Motor neuron (in vitro differentiated cells): ENCODE measurements at regions of chr4 and their contacts with region 1.

Region 1: GRCh38 chr4:41214136-41214824 is at the start of gene APBB2:
- ATAC-seq: peak; percentile 73 to 87 (median 85)
- H3K4me3 ChIP-seq: peak within 1 kb of the TSS; percentile 58 to 85 (median 71)
- H3K27ac ChIP-seq: peak within 1 kb of the TSS; percentile 72 to 77
- H3K4me1 ChIP-seq: peaks cover 11 to 27% of the 10 kb centered on the region in 2 donors
- total RNA-seq, gene APBB2: 32.2 to 68.9 (median 52.0) TPM

Region 2: DNA sequence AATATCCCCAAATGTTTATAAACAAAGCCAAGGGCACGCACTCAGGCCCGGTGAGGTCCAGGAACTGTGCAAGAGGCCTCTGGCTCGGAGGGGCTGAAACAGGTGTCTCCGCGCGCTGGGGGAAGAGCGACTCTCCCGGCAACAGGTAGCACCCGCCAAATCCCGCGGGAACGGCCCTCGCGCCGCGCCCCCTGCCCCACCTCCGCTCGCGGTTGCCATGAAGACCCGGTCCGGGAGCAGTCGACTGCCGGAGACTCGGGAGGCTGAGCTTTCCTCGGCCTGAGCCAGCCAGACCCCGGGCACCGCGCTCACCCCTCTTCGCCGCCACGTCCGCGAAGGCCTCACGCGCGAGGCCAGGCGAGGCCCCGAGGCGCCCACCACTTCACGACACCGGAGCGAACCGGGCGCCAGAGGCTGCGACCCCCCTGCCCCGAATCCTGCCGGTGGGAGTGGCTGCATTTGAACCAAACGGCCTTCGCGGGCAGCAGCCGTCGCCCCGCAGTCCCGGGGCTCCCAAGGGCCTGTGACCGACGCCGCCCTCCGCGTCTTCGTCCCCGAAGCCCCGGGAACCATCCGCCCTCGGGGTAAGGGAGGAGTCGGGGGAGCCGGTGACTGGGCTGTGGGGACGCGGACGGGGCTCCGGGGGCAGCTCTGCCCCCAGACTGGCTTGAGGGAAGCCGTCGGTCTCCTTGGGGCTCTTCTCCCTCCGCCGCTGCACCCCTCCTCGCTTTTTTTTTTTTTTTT is 464.4 kb before region 1 on chr4 and contains the start of gene NSUN7:
- in situ Hi-C with region 1: loop called in 1 of 9 experiments (anchors 25 kb)
- ATAC-seq: peak in 7 of 8 experiments; percentile 36 to 93 (median 91)
- H3K4me3 ChIP-seq: peak within 1 kb of the TSS; percentile 30 to 54 (median 52)
- H3K27ac ChIP-seq: peak within 1 kb of the TSS in 1 of 2 donors; percentile 32
- H3K4me1 ChIP-seq: no peaks in the 10 kb centered on the region
- total RNA-seq, gene NSUN7: 0.15 to 3.2 (median 2.0) TPM in 7 of 8 experiments, not detected in the other

Region 3: DNA sequence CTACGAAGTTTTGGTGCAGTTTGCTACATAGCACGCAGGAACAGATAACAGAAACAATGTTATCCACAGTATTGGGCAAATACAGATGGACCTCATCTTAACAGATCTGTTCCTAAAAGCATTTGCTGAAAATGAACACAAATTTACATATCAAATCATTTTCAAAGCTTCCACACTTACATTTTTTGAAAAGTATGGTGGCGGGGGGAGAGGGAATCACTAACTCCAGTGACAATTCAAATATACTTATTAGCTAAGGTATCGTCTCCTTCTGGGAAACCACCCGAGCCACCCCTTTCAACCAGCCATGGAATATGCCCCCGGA is 289.5 kb before region 1 on chr4:
- in situ Hi-C with region 1: loop called in 3 of 9 experiments (anchors 5 to 25 kb)
- ATAC-seq: no peak
- H3K4me3 ChIP-seq: no peak overlapping the region
- H3K27ac ChIP-seq: no peak overlapping the region
- H3K4me1 ChIP-seq: no peaks in the 10 kb centered on the region

Region 4: DNA sequence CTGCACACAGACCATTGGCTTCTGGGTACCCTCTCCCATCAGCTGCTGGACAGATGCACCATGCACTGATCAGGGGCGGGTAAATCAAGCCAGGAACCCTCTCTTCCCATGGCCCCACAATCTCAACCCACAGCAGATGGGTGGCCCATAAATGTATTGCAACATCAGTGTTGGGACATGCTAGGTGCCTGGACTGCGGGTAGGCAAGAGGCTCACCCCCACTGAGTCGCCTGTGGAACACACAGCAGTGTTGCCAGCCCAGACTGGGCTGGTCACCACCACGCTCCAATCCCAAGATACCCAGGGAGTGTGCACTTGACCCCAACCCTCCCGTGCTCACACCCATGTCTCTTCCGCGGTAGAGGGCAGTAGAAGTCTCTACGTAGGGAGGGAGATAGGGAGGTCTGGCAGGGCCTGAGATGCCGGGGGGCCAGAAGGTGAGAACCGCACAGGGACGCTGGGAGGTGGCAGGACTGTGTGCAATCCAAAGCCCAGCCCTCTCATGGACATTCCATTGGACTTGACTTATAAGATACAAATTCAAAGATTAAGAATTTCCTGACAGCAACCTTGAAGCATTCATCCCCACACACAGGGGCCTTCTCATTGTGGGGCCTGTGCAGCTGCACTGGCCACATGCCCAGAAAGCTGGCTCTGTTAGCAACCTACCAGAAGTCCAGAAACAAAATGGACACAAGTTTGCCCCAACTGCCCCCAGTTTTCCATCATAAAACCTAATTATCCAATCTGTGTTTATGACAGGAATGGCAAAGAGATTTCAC is 280.8 kb before region 1 on chr4:
- in situ Hi-C with region 1: loop called in 3 of 9 experiments (anchors 5 to 25 kb)
- ATAC-seq: peak in 3 of 8 experiments; percentile 18 to 75 (median 32)
- H3K4me3 ChIP-seq: no peak overlapping the region
- H3K27ac ChIP-seq: no peak overlapping the region
- H3K4me1 ChIP-seq: peaks cover 0 to 5% of the 10 kb centered on the region in 2 donors

Region 5: GRCh38 chr4:40976343-40976742 is 237.9 kb before region 1 on chr4:
- in situ Hi-C with region 1: loop called in 2 of 9 experiments (anchors 5 to 25 kb)
- ATAC-seq: peak in 3 of 8 experiments; percentile 43 to 66 (median 58)
- H3K4me3 ChIP-seq: no peak overlapping the region
- H3K27ac ChIP-seq: no peak overlapping the region
- H3K4me1 ChIP-seq: no peaks in the 10 kb centered on the region

Region 6: GRCh38 chr4:42078184-42078801 is 864.0 kb after region 1 on chr4:
- in situ Hi-C with region 1: no loop called
- ATAC-seq: no peak
- H3K4me3 ChIP-seq: no peak overlapping the region
- H3K27ac ChIP-seq: no peak overlapping the region
- H3K4me1 ChIP-seq: no peaks in the 10 kb centered on the region